CD4-positive, alpha-beta T cell (primary cell): ENCODE measurements at regions of chr10 and their contacts with region 1.

Region 1: DNA sequence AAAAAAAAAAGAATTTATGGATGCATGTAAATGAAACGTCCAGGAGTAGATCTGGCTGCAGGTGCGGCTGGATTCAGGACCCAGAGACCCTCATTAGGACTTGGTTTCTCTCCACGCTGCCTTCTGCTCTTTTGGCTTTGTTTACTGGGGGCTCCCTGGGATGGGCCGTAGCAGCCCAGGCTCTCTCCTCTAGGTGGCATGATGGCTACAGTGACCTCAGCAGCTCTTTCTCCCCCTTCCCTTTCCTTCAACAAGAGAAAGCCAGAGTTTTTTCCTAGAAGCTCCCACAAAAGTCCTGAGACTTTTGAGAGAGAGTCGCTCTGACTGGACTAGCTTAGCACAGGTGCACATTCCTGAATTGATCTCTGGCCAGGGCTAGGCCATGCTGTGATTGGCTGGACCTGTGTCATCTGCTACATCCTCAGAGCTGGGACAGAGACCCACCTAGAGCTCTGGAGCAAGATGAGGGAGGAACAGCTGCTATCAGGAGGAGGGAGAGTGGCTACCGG is 67.8 kb upstream of the PDCD4 start:
- DNase-seq: peak in 9 of 14 experiments; percentile 7 to 71 (median 35)
- ATAC-seq: no peak
- H3K4me3 ChIP-seq: no peak overlapping the region
- H3K4me3 Mint-ChIP-seq: peak overlapping the region; percentile 59
- H3K27ac ChIP-seq: peak overlapping the region; percentile 45 to 54
- H3K27ac Mint-ChIP-seq: peak overlapping the region; percentile 88
- H3K4me1 ChIP-seq: peaks cover 28% of the 10 kb centered on the region
- H3K4me1 Mint-ChIP-seq: peaks cover 49% of the 10 kb centered on the region
- H3K27me3 ChIP-seq: no peaks in the 10 kb centered on the region
- H3K27me3 Mint-ChIP-seq: no peaks in the 10 kb centered on the region
- CTCF ChIP-seq: peak; percentile 42

Region 2: DNA sequence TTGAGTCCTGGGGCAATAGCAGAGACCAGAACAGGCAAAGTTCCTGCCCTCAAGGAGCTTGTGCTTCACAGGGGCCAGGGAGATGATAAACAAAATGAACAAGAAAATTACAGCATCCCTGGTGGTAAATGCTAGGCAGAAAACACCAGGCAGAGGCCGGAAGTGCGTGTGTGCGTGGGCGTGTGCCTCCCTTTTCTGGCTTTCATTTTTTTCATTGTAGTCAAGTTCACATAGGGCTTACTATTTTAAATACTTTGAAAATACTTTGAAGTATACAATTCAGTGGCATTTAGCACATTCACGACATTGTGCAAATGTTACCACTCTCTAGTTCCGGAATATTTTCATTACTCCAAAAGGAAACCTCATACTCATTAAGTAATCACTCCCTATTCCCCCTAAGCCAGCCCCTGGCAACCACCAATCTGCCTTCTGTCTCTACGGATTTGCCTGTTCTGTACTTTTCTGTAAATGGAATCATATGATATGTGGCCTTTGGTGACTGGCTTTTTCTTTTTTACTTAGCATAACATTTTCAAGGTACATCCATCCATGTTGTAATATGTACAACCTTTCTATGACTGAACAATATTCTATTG is 20.3 kb before region 1 on chr10:
- CTCF ChIA-PET with region 1: no interaction called
- POLR2A ChIA-PET with region 1: interaction called, 4 read pairs
- intact Hi-C with region 1: loop called in 1 of 2 experiments (anchors 1 kb)
- DNase-seq: peak; percentile 46 to 90 (median 71)
- ATAC-seq: peak; percentile 83
- H3K4me3 ChIP-seq: no peak overlapping the region
- H3K4me3 Mint-ChIP-seq: peak overlapping the region; percentile 0
- H3K27ac ChIP-seq: peak overlapping the region; percentile 31 to 62
- H3K27ac Mint-ChIP-seq: peak overlapping the region; percentile 75
- H3K4me1 ChIP-seq: peaks cover 21% of the 10 kb centered on the region
- H3K4me1 Mint-ChIP-seq: peaks cover 65% of the 10 kb centered on the region
- H3K27me3 ChIP-seq: no peaks in the 10 kb centered on the region
- H3K27me3 Mint-ChIP-seq: no peaks in the 10 kb centered on the region
- CTCF ChIP-seq: peak; percentile 10

Region 3: GRCh38 chr10:110857265-110858158 is 53.6 kb after region 1 on chr10:
- CTCF ChIA-PET with region 1: interaction called, 9 read pairs
- POLR2A ChIA-PET with region 1: interaction called, 30 read pairs
- intact Hi-C with region 1: no loop called
- DNase-seq: peak in 5 of 14 experiments; percentile 32 to 74 (median 58)
- ATAC-seq: peak; percentile 43
- H3K4me3 ChIP-seq: no peak overlapping the region
- H3K4me3 Mint-ChIP-seq: peak overlapping the region; percentile 49
- H3K27ac ChIP-seq: peak overlapping the region; percentile 77 to 88
- H3K27ac Mint-ChIP-seq: peak overlapping the region; percentile 96
- H3K4me1 ChIP-seq: peaks cover 80% of the 10 kb centered on the region
- H3K4me1 Mint-ChIP-seq: peaks cover 89% of the 10 kb centered on the region
- H3K27me3 ChIP-seq: no peaks in the 10 kb centered on the region
- H3K27me3 Mint-ChIP-seq: no peaks in the 10 kb centered on the region
- CTCF ChIP-seq: no peak

Region 4: GRCh38 chr10:110864662-110865140 is 60.8 kb after region 1 on chr10:
- CTCF ChIA-PET with region 1: interaction called, 4 read pairs
- POLR2A ChIA-PET with region 1: interaction called, 30 read pairs
- intact Hi-C with region 1: no loop called
- DNase-seq: peak in 11 of 14 experiments; percentile 26 to 95 (median 58)
- ATAC-seq: peak; percentile 67
- H3K4me3 ChIP-seq: peak overlapping the region; percentile 37
- H3K4me3 Mint-ChIP-seq: peak overlapping the region; percentile 86
- H3K27ac ChIP-seq: peak overlapping the region; percentile 88 to 99
- H3K27ac Mint-ChIP-seq: peak overlapping the region; percentile 96
- H3K4me1 ChIP-seq: peaks cover 97% of the 10 kb centered on the region
- H3K4me1 Mint-ChIP-seq: peaks cover 99% of the 10 kb centered on the region
- H3K27me3 ChIP-seq: no peaks in the 10 kb centered on the region
- H3K27me3 Mint-ChIP-seq: no peaks in the 10 kb centered on the region
- CTCF ChIP-seq: no peak

Region 5: DNA sequence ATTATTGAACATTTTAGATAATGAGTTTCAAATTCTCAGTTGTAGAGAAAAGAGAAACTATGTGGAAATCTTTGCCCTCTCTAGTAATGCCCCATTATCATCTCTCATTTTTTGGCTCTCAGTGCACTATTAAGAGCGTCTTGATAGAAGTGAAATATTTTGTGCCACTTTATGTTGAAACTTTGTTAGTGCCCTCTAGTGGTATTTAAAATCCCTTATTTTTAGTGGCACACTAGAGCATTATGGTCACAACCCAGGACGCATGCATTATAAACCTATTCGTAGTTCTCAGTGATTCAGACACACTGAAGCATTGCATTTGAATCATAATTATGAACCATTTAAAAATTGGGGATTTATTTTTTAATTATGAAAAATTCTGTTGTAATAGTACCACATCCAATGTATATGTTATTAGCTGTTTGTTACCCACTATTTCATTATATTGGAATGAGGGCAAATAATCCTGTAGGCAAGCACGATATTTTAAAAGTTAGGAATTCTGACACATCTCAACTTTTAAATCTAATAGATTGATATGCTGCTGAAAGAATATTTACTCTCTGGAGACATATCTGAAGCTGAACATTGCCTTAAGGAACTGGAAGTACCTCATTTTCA is 89.8 kb after region 1 on chr10:
- CTCF ChIA-PET with region 1: interaction called, 8 read pairs
- POLR2A ChIA-PET with region 1: interaction called, 13 read pairs
- intact Hi-C with region 1: loop called (anchors 2 to 5 kb)
- DNase-seq: peak in 4 of 14 experiments; percentile 10 to 77 (median 74)
- ATAC-seq: peak; percentile 74
- H3K4me3 ChIP-seq: no peak overlapping the region
- H3K4me3 Mint-ChIP-seq: peak overlapping the region; percentile 6
- H3K27ac ChIP-seq: no peak overlapping the region
- H3K27ac Mint-ChIP-seq: peak overlapping the region; percentile 51
- H3K4me1 ChIP-seq: no peaks in the 10 kb centered on the region
- H3K4me1 Mint-ChIP-seq: peaks cover 61% of the 10 kb centered on the region
- H3K27me3 ChIP-seq: no peaks in the 10 kb centered on the region
- H3K27me3 Mint-ChIP-seq: no peaks in the 10 kb centered on the region
- CTCF ChIP-seq: peak; percentile 79